PC-9 (cell line): ENCODE measurements at regions of chr6 and their contacts with region 1.

Region 1: DNA sequence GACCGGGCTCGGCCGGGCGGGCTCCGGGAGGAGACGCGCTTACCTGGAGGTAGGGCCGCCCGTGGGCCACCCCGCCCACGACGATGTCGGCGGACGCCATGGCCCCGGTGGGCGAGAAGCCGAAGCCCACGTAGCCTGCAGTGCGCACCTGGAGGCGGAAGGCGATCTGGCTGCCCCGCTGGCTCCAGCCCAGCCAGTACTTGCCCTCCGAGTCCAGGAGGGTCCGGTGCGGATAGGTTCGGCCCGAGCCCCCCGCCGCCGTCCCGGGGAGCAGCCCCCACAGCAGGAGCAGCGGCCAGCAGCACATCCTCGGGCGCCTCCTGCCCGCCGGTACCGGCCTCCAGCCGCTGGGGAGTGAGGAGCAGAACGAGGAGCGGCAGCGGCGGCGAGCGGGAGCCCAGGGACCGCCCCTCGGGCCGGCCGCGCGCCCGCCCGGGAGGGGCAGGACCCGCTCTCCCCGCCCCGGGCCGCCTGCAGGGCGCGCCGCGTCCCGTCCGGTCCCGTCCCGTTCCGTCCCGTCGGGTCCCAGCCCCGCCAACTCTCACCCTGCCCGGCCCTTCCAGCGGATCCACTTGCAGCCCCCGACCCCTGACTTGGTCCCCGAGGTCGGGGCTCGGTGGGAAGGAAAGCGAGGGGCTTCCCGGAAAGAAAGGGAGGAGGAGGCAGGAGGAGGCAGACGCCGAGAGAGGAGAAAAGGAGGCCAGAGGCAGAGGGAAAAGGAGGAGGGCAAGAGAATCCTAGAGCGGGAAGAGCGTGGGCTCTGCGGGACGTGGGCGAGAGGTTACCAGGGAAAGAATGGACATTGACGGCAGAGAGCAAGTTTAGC is at the start of gene MOXD1:
- DNase-seq: peak in 1 of 2 experiments; percentile 56
- H3K4me3 ChIP-seq: peak within 1 kb of the TSS; percentile 49; the same call in 1 of the 2 replicates
- H3K27ac ChIP-seq: no peak within 1 kb of the TSS
- H3K4me1 ChIP-seq: peaks cover 16% of the 10 kb centered on the region
- H3K27me3 ChIP-seq: no peaks in the 10 kb centered on the region
- CTCF ChIP-seq: no peak
- total RNA-seq, gene MOXD1: 1.0 and 1.3 TPM in 2 replicates

Region 2: GRCh38 chr6:132365281-132365907 is 35.9 kb before region 1 on chr6:
- CTCF ChIA-PET with region 1: no interaction called
- POLR2A ChIA-PET with region 1: no interaction called
- intact Hi-C with region 1: no loop called
- DNase-seq: no peak
- H3K4me3 ChIP-seq: no peak overlapping the region
- H3K27ac ChIP-seq: no peak overlapping the region
- H3K4me1 ChIP-seq: no peaks in the 10 kb centered on the region
- H3K27me3 ChIP-seq: no peaks in the 10 kb centered on the region
- CTCF ChIP-seq: no peak

Region 3: GRCh38 chr6:132919045-132919860 is 517.9 kb after region 1 on chr6:
- CTCF ChIA-PET with region 1: no interaction called
- POLR2A ChIA-PET with region 1: interaction called, 17 read pairs
- intact Hi-C with region 1: no loop called
- DNase-seq: peak; percentile 71 to 82
- H3K4me3 ChIP-seq: no peak overlapping the region
- H3K27ac ChIP-seq: peak overlapping the region; percentile 3; the same call in 1 of the 2 replicates
- H3K4me1 ChIP-seq: peaks cover 17% of the 10 kb centered on the region
- H3K27me3 ChIP-seq: no peaks in the 10 kb centered on the region
- CTCF ChIP-seq: no peak